Activated B cell treated with CpG ODN at 0.5 μM for 24 hours (primary cell): ENCODE measurements at regions of chr7 and their contacts with region 1.

Region 1: DNA sequence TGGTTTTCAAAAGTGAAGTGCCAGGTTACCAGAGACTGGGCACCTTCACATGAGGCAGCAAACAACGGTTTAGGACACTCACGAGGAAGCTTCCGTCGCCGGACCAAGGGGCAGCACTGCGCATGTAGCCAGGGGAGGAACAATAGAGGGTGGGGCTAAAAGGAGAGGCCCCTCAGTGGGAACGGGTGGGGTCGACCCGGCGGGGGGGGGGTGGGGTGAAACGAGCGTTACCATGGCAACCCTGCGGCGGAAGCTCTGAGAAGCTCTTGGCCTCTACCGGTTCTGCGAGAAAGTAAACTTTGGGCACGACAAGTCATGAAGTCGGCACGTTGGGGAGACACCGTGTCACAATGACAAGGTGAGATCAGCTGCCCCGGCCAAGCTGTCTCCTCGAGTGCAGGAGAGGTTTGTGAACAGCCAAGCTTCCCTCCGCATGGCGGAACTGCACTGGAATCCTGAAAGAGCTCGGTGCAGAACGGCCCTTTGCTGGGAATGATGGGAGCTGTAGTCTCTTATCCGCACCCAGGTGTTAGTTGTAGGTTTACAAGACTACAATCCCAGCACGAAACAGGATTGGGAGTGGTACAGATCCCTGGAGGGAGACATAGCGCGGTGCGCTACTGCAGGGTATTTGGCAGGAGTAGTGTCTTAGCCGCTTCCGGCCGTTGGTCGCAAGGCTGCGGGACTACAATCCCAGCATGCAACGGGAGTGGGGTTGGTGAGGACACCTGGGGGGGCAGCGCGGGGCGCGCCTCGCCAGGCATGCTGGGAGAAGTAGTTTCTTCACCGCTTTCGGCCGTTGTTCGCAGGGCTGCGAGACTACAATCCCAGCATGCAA is 72.8 kb upstream of the ZNF722 start:
- DNase-seq: peak; percentile 63
- ATAC-seq: peak; percentile 89
- H3K4me3 Mint-ChIP-seq: peak overlapping the region; percentile 90
- H3K27ac Mint-ChIP-seq: peak overlapping the region; percentile 93
- H3K4me1 Mint-ChIP-seq: peaks cover 4% of the 10 kb centered on the region
- H3K27me3 Mint-ChIP-seq: no peaks in the 10 kb centered on the region
- CTCF ChIP-seq: no peak

Region 2: GRCh38 chr7:63900394-63901203 is 25.2 kb before region 1 on chr7:
- CTCF ChIA-PET with region 1: no interaction called
- POLR2A ChIA-PET with region 1: interaction called, 19 read pairs
- intact Hi-C with region 1: loop called (anchors 1 kb)
- DNase-seq: peak; percentile 61
- ATAC-seq: peak; percentile 92
- H3K4me3 Mint-ChIP-seq: peak overlapping the region; percentile 96
- H3K27ac Mint-ChIP-seq: peak overlapping the region; percentile 95
- H3K4me1 Mint-ChIP-seq: peaks cover 2% of the 10 kb centered on the region
- H3K27me3 Mint-ChIP-seq: no peaks in the 10 kb centered on the region
- CTCF ChIP-seq: no peak

Region 3: DNA sequence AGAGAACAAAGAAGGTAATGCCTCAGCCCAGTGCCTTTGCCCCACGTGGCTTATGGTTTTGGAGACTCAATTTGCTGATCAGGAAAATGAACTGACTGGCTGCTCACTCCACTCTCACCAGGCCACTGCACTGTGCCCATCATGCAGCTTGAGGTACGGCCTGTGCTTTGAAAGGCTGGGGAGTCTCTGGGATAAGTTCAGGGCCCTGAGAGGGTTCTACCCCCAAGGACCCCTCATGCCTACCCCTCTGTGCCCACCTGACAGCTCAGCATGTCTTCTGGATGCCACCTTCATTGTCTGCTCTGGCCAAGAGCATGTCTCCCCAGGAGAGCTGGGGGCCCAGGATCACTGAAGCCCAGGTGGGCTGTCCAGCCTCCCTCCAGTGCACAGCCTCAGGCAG is 27.3 kb after region 1 on chr7:
- CTCF ChIA-PET with region 1: no interaction called
- POLR2A ChIA-PET with region 1: no interaction called
- intact Hi-C with region 1: no loop called
- DNase-seq: no peak
- ATAC-seq: no peak
- H3K4me3 Mint-ChIP-seq: no peak overlapping the region
- H3K27ac Mint-ChIP-seq: no peak overlapping the region
- H3K4me1 Mint-ChIP-seq: no peaks in the 10 kb centered on the region
- H3K27me3 Mint-ChIP-seq: no peaks in the 10 kb centered on the region
- CTCF ChIP-seq: no peak

Region 4: GRCh38 chr7:64313740-64314491 is 388.1 kb after region 1 on chr7 and contains the start of gene ZNF736:
- CTCF ChIA-PET with region 1: no interaction called
- POLR2A ChIA-PET with region 1: interaction called, 4 read pairs
- intact Hi-C with region 1: loop called (anchors 2 kb)
- DNase-seq: peak; percentile 70
- ATAC-seq: peak; percentile 100
- H3K4me3 Mint-ChIP-seq: peak within 1 kb of the TSS; percentile 100
- H3K27ac Mint-ChIP-seq: peak within 1 kb of the TSS; percentile 99
- H3K4me1 Mint-ChIP-seq: peaks cover 41% of the 10 kb centered on the region
- H3K27me3 Mint-ChIP-seq: no peaks in the 10 kb centered on the region
- CTCF ChIP-seq: no peak
- total RNA-seq, gene ZNF736: 54.4 and 71.6 TPM in 2 replicates

Region 5: GRCh38 chr7:64794171-64794844 is 868.5 kb after region 1 on chr7 and contains the start of gene ZNF138:
- CTCF ChIA-PET with region 1: no interaction called
- POLR2A ChIA-PET with region 1: interaction called, 5 read pairs
- intact Hi-C with region 1: loop called (anchors 5 kb)
- DNase-seq: peak; percentile 83
- ATAC-seq: peak; percentile 99
- H3K4me3 Mint-ChIP-seq: peak within 1 kb of the TSS; percentile 99
- H3K27ac Mint-ChIP-seq: peak within 1 kb of the TSS; percentile 98
- H3K4me1 Mint-ChIP-seq: peaks cover 27% of the 10 kb centered on the region
- H3K27me3 Mint-ChIP-seq: no peaks in the 10 kb centered on the region
- CTCF ChIP-seq: no peak
- total RNA-seq, gene ZNF138: 14.2 and 17.8 TPM in 2 replicates